ENCODE measurements at regions of chr10 and their contacts with region 1.

Region 1: DNA sequence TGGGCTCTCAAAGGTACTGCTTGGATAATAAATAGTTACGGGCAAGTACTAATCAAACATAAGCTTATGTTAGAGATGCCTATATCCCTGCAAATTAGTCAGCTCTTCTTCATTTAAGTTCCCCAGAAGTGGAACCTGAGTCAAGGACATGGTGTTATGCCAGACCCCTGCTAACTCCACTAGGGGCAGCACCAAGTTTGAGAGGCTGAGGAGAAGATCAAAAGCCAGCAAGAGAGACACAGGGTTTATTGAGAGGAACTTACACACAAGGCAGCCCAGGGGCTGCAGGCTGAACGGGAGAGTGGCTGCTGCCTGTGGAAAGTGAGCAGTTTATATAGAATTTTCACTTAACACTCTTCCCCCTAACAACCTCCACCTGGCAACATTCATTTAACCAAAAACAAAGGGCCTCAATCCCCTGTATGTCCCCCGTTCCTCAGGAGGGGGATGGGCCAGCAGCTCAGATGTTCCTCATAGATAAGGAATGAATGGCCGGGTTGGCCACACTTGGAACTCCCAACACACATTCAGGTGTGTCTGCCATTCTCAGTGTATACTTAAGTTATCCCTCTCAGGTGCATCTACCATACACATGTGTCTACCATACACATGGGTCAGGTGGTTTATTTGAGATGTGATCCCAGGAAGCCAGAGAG is 62.6 kb upstream of the GHITM start:
- DNase-seq: peak; percentile 29
- ATAC-seq: peak; percentile 93
- H3K4me3 Mint-ChIP-seq: no peak overlapping the region
- H3K27ac Mint-ChIP-seq: no peak overlapping the region
- H3K4me1 Mint-ChIP-seq: peaks cover 14% of the 10 kb centered on the region
- H3K27me3 Mint-ChIP-seq: peaks cover 2% of the 10 kb centered on the region; the same call in 1 of the 2 replicates
- CTCF ChIP-seq: 0 out of 2 replicates have a peak, but pooled peaks have one; percentile 20

Region 2: DNA sequence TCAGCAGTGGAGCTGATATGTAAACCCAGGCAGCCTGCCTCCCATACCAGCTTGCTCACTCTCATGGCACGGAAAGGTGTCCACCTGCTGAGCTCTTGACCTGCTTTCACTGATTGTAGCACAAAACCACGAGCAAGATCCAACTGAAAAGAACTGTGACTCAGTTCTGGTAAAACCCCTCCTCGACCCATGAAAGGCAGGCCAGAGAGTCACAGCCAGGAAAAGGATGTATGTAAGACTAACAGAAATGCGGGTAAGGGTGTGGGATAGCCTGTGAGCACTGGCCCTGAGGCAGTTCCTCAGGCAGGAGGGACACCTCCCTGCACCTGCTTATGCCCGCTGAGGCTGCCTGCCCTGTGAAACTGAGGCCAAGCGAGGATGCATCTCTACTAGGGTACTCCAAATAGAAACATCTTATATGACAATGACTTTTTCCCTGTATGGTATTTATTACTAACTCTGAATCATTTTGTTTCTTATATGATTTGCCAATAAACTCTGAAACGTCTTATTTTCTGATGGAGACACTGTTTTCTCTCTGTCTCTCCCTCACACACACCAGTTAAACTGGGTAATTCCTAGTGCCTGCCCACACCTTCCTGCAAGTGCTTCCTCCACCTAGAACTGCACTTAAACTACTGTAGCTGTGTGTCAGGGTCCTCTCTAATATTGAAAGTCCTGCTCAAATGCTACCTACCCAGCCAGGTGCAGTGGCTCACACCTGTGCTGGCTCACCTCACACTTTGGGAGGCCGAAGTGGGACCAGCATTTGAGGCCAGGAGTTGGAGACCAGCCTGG is 10.7 kb before region 1 on chr10:
- CTCF ChIA-PET with region 1: interaction called, 13 read pairs
- POLR2A ChIA-PET with region 1: no interaction called
- DNase-seq: no peak
- ATAC-seq: no peak
- H3K4me3 Mint-ChIP-seq: no peak overlapping the region
- H3K27ac Mint-ChIP-seq: no peak overlapping the region
- H3K4me1 Mint-ChIP-seq: 0 out of 2 replicates have a peak, but pooled peaks cover 5% of the 10 kb centered on the region
- H3K27me3 Mint-ChIP-seq: no peaks in the 10 kb centered on the region; the same call in 1 of the 2 replicates
- CTCF ChIP-seq: no peak